ENCODE measurements at regions of chr20 and their contacts with region 1.

Region 1: DNA sequence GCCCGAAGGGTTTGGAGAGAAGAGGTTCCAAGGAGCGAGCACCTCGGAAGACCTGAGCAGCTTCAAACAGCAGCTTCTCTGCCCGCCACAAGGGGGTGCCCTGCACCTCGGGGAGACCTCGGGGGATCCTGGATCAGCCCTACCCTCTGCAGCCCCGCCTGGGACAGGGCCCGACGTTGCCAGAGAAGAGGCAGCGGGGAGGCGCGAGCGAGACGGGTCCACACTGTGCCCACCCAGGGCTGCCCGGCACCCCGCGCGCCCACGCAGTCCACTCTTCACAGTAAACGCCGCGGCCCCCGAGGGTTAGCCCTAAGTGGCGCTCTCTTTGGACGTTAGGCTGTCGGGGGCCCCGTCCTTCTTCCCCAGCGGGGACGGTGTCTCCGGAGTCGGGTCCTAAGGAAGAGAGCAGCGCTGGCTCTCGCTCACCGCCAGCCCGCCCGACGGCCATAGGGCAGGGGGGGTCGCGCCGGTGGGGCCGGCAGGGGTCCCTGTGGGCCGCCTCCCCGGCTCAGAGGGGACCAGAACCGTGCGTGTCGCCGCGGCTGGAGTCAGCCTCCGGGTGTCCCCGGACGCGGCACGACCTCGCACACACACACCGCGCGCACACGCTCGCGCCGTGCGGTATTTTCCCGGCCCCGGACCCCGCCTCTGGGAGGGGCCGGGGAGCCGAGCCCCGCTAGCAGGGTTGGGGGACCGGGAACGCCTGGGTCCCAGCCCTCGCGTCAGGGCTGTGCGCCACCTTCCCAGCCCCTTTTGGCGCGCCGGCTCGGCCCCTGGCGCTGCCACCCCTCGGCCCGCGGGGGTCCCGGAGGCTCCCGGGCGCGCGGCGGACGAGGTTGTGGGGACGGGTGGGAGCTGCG is 929 bp downstream of the CDH22 start:
- DNase-seq: peak; percentile 44
- ATAC-seq: peak; percentile 83
- H3K4me3 ChIP-seq: peak overlapping the region; percentile 42 to 78 (median 58); a peak in 4 of 6 replicates
- H3K27ac ChIP-seq: no peak overlapping the region
- H3K4me1 ChIP-seq: peaks cover 14% of the 10 kb centered on the region
- H3K27me3 ChIP-seq: peaks cover 45 to 91% of the 10 kb centered on the region in 2 experiments
- CTCF ChIP-seq: peak; percentile 98
- EP300 ChIP-seq: no peak
- POLR2A ChIP-seq: no peak
- RAD21 ChIP-seq: peak; percentile 94

Region 2: DNA sequence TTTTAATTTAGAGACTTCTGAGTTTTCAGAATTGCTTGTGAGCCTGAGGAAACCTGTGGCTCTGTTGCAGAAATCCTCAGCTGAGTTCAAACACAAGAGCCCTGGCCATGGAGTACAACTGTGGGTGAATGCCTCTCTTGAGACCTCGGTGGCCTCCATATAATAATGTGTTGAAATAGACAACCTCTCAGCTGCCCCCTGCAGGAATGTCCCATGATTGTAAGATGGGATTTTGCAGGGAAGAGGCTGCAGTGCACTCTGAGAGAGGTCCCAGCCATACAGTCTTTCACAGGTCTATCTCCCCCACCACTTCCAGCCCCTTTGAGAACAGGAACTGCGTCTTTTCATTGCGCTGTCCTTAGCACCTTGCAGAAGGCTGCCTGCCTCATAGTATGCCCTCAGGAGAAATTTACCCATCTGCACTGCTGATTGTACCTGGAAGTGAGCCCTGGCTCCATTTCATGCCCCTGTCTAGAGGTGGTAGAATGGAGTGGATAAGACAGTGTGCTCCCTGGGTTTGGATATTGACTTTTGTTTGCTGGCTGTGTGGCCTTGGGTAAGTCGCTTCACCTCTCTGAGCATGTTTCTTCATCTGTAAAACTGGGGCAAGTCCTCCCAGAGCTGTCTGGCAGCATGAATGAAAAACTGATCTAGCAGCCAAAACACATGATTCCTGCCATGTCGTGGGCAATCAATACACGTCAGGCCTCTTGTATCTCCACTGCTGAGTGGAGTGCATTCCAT is 17.8 kb after region 1 on chr20:
- CTCF ChIA-PET with region 1: interaction called, 16 read pairs
- POLR2A ChIA-PET with region 1: no interaction called
- in situ Hi-C with region 1: no loop called
- intact Hi-C with region 1: loop called (anchors 2 kb)
- DNase-seq: peak; percentile 69
- ATAC-seq: peak; percentile 91
- H3K4me3 ChIP-seq: no peak overlapping the region
- H3K27ac ChIP-seq: no peak overlapping the region
- H3K4me1 ChIP-seq: no peaks in the 10 kb centered on the region
- H3K27me3 ChIP-seq: peaks cover 12 to 53% of the 10 kb centered on the region in 2 experiments
- CTCF ChIP-seq: peak; percentile 68
- EP300 ChIP-seq: no peak
- POLR2A ChIP-seq: no peak
- RAD21 ChIP-seq: 0 out of 2 replicates have a peak, but pooled peaks have one; percentile 33

Region 3: DNA sequence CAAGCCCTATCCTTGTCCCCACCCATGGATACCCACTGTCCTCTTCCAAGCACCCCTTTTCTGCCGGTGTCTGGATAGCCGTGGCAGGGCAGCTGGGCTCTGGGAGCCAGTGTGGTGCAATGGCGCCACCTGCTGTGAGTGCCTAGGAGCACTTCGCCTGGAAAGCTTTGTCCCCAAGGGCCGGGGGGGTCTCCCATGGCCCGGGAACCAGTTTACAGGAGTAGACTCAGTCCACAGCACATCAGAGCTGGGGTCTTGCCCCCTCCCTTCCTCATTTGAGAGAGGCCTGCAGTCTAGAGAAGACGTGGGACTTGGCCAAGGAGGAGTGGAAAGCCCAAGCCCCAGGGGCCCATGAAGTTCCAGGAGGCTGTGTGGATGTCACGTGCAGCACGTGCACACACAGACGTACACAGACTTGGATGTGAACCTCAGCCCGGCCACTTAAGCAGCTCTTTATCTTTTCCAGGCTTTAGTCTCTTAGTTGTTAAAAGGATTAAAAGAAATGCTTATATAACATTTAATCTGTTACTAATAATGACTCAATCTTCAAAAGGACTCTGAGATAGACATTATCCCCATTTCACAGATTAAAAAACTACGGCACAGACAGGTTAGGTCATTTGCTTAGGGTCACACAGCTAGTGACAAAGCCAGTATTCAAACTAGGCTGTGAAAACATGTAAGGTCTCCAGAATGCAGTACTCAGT is 41.8 kb after region 1 on chr20:
- CTCF ChIA-PET with region 1: interaction called, 16 read pairs
- POLR2A ChIA-PET with region 1: no interaction called
- in situ Hi-C with region 1: no loop called
- intact Hi-C with region 1: loop called (anchors 2 kb)
- DNase-seq: peak; percentile 46
- ATAC-seq: peak; percentile 58
- H3K4me3 ChIP-seq: no peak overlapping the region
- H3K27ac ChIP-seq: no peak overlapping the region
- H3K4me1 ChIP-seq: peaks cover 39% of the 10 kb centered on the region
- H3K27me3 ChIP-seq: no peaks in the 10 kb centered on the region
- CTCF ChIP-seq: peak; percentile 96
- EP300 ChIP-seq: no peak
- POLR2A ChIP-seq: no peak
- RAD21 ChIP-seq: peak; percentile 87

Region 4: DNA sequence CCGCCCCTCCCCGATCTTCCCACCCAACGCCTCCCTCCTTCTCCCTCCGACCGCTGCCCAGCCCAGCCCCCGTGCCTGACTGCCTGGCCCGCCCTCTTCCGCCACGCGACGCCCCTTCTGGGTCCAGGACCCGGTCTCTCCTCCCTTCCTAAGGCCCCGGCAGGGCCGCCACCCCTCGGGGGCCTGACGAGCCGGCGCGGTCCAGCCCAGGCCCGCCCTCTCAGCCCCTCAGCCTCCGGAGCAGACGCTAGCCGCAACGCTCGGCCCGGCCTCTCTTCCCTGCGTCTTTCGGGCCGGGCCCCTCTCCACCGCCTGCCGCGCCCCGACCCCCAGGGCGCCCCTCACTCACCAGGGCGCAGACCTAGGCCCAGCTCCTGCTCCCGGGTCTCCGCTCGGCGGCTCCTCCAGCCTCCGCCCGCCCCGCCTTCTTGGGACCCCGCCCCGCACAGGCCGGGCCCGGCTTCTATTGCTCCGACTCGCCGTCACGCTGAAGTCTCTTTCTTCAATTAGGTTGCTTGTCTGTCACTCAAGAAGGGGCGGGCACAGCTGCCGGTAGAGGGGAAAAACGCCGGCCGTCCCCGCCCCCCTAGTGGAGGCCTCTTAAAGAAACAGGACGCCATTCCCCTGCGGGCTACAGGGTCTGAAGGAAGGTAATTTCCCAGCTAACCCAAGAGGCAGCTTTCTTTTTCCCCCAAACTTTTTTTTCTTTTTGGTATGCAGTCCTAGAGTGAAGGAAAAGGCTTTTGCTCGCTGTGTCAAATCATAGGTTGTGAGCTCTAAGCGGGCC is 99.0 kb after region 1 on chr20 and contains the start of gene ELMO2:
- CTCF ChIA-PET with region 1: no interaction called
- POLR2A ChIA-PET with region 1: interaction called, 3 read pairs
- in situ Hi-C with region 1: no loop called
- intact Hi-C with region 1: loop called (anchors 1 kb)
- DNase-seq: peak; percentile 99
- ATAC-seq: peak; percentile 91
- H3K4me3 ChIP-seq: peak within 1 kb of the TSS; percentile 90 to 98 (median 93)
- H3K27ac ChIP-seq: peak within 1 kb of the TSS; percentile 79
- H3K4me1 ChIP-seq: peaks cover 79% of the 10 kb centered on the region
- H3K27me3 ChIP-seq: no peaks in the 10 kb centered on the region; a peak in 1 of 5 replicates
- CTCF ChIP-seq: peak; percentile 22
- EP300 ChIP-seq: peak in 1 of 2 experiments; percentile 17; a peak in 1 of 4 replicates
- POLR2A ChIP-seq: peak; percentile 53 to 64
- RAD21 ChIP-seq: no peak
- total RNA-seq, gene ELMO2: 35.7 and 42.8 TPM in 2 replicates

Region 5: GRCh38 chr20:46411637-46412036 is 104.3 kb after region 1 on chr20:
- CTCF ChIA-PET with region 1: no interaction called
- POLR2A ChIA-PET with region 1: interaction called, 3 read pairs
- in situ Hi-C with region 1: no loop called
- intact Hi-C with region 1: loop called (anchors 1 kb)
- DNase-seq: peak; percentile 50
- ATAC-seq: no peak
- H3K4me3 ChIP-seq: no peak overlapping the region
- H3K27ac ChIP-seq: no peak overlapping the region
- H3K4me1 ChIP-seq: peaks cover 52% of the 10 kb centered on the region
- H3K27me3 ChIP-seq: peaks cover 2 to 22% of the 10 kb centered on the region in 2 experiments; a peak in 3 of 5 replicates
- CTCF ChIP-seq: peak; percentile 25; the same call in 1 of the 2 replicates
- EP300 ChIP-seq: no peak
- POLR2A ChIP-seq: no peak
- RAD21 ChIP-seq: no peak

Region 6: GRCh38 chr20:46438156-46438750 is 130.9 kb after region 1 on chr20:
- CTCF ChIA-PET with region 1: interaction called, 10 read pairs
- POLR2A ChIA-PET with region 1: no interaction called
- in situ Hi-C with region 1: no loop called
- intact Hi-C with region 1: loop called (anchors 1 kb)
- DNase-seq: peak; percentile 50
- ATAC-seq: peak; percentile 95
- H3K4me3 ChIP-seq: no peak overlapping the region
- H3K27ac ChIP-seq: no peak overlapping the region
- H3K4me1 ChIP-seq: no peaks in the 10 kb centered on the region
- H3K27me3 ChIP-seq: peaks cover 2 to 6% of the 10 kb centered on the region in 2 experiments; a peak in 4 of 5 replicates
- CTCF ChIP-seq: peak; percentile 75
- EP300 ChIP-seq: no peak
- POLR2A ChIP-seq: no peak
- RAD21 ChIP-seq: peak; percentile 56

Measured in HepG2 (cell line).